Activated CD4-positive, alpha-beta T cell treated with anti-CD3 and anti-CD28 coated beads for 36 hours (primary cell): ENCODE measurements at regions of chr10 and their contacts with region 1.

Region 1: GRCh38 chr10:86399879-86400704 is 33.5 kb upstream of the GRID1 start:
- DNase-seq: peak; percentile 98
- ATAC-seq: peak; percentile 94
- H3K4me3 Mint-ChIP-seq: peak overlapping the region; percentile 83
- H3K27ac Mint-ChIP-seq: peak overlapping the region; percentile 89
- H3K4me1 Mint-ChIP-seq: peaks cover 21% of the 10 kb centered on the region
- H3K27me3 Mint-ChIP-seq: no peaks in the 10 kb centered on the region

Region 2: GRCh38 chr10:85593226-85593772 is 806.8 kb before region 1 on chr10:
- CTCF ChIA-PET with region 1: no interaction called
- POLR2A ChIA-PET with region 1: no interaction called
- intact Hi-C with region 1: no loop called
- DNase-seq: no peak
- ATAC-seq: no peak
- H3K4me3 Mint-ChIP-seq: no peak overlapping the region
- H3K27ac Mint-ChIP-seq: peak overlapping the region; percentile 51
- H3K4me1 Mint-ChIP-seq: peaks cover 18% of the 10 kb centered on the region
- H3K27me3 Mint-ChIP-seq: no peaks in the 10 kb centered on the region

Region 3: GRCh38 chr10:86363184-86363832 is 36.8 kb before region 1 on chr10:
- CTCF ChIA-PET with region 1: no interaction called
- POLR2A ChIA-PET with region 1: no interaction called
- intact Hi-C with region 1: no loop called
- DNase-seq: peak; percentile 41
- ATAC-seq: no peak
- H3K4me3 Mint-ChIP-seq: no peak overlapping the region
- H3K27ac Mint-ChIP-seq: no peak overlapping the region
- H3K4me1 Mint-ChIP-seq: peaks cover 12% of the 10 kb centered on the region
- H3K27me3 Mint-ChIP-seq: peaks cover 47% of the 10 kb centered on the region

Region 4: GRCh38 chr10:86389441-86390193 is 10.5 kb before region 1 on chr10:
- CTCF ChIA-PET with region 1: interaction called, 12 read pairs
- POLR2A ChIA-PET with region 1: interaction called, 4 read pairs
- intact Hi-C with region 1: no loop called
- DNase-seq: peak; percentile 41
- ATAC-seq: peak; percentile 58
- H3K4me3 Mint-ChIP-seq: peak overlapping the region; percentile 64
- H3K27ac Mint-ChIP-seq: no peak overlapping the region
- H3K4me1 Mint-ChIP-seq: peaks cover 13% of the 10 kb centered on the region
- H3K27me3 Mint-ChIP-seq: peaks cover 21% of the 10 kb centered on the region

Region 5: DNA sequence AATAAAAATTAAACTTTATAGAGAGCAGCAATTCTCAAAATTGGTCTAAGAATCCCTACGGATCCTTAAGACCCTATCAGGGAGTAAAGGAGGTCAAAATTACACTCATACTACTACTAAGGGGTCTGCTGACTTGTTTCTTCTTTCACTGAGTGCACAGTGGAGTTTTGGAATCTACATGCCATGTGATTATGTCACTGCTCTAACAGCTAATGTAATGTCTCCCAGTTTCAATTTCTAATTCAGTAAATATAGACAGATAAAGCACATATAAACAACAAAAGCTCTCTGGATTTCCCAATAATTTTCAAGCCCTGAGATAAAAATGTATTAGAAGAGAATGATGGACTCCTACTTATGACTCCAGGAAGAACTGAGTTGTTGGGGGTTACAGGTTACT is 46.9 kb after region 1 on chr10:
- CTCF ChIA-PET with region 1: interaction called, 3 read pairs
- POLR2A ChIA-PET with region 1: interaction called, 5 read pairs
- intact Hi-C with region 1: loop called in 1 of 2 experiments (anchors 2 kb)
- DNase-seq: no peak
- ATAC-seq: peak; percentile 47
- H3K4me3 Mint-ChIP-seq: no peak overlapping the region
- H3K27ac Mint-ChIP-seq: peak overlapping the region; percentile 73
- H3K4me1 Mint-ChIP-seq: peaks cover 30% of the 10 kb centered on the region
- H3K27me3 Mint-ChIP-seq: no peaks in the 10 kb centered on the region

Region 6: GRCh38 chr10:86535057-86535882 is 135.2 kb after region 1 on chr10:
- CTCF ChIA-PET with region 1: interaction called, 9 read pairs
- POLR2A ChIA-PET with region 1: interaction called, 3 read pairs
- intact Hi-C with region 1: loop called (anchors 1 to 5 kb)
- DNase-seq: peak; percentile 60
- ATAC-seq: peak; percentile 67
- H3K4me3 Mint-ChIP-seq: peak overlapping the region; percentile 69
- H3K27ac Mint-ChIP-seq: peak overlapping the region; percentile 80
- H3K4me1 Mint-ChIP-seq: peaks cover 25% of the 10 kb centered on the region
- H3K27me3 Mint-ChIP-seq: no peaks in the 10 kb centered on the region

Region 7: GRCh38 chr10:86644152-86644793 is 244.2 kb after region 1 on chr10:
- CTCF ChIA-PET with region 1: no interaction called
- POLR2A ChIA-PET with region 1: no interaction called
- intact Hi-C with region 1: loop called in 1 of 2 experiments (anchors 5 kb)
- DNase-seq: peak; percentile 49
- ATAC-seq: peak; percentile 78
- H3K4me3 Mint-ChIP-seq: no peak overlapping the region
- H3K27ac Mint-ChIP-seq: no peak overlapping the region
- H3K4me1 Mint-ChIP-seq: peaks cover 13% of the 10 kb centered on the region
- H3K27me3 Mint-ChIP-seq: peaks cover 8% of the 10 kb centered on the region